Psoas muscle (tissue), 8 donors: ENCODE measurements at regions of chr5 and their contacts with region 1.

Region 1: DNA sequence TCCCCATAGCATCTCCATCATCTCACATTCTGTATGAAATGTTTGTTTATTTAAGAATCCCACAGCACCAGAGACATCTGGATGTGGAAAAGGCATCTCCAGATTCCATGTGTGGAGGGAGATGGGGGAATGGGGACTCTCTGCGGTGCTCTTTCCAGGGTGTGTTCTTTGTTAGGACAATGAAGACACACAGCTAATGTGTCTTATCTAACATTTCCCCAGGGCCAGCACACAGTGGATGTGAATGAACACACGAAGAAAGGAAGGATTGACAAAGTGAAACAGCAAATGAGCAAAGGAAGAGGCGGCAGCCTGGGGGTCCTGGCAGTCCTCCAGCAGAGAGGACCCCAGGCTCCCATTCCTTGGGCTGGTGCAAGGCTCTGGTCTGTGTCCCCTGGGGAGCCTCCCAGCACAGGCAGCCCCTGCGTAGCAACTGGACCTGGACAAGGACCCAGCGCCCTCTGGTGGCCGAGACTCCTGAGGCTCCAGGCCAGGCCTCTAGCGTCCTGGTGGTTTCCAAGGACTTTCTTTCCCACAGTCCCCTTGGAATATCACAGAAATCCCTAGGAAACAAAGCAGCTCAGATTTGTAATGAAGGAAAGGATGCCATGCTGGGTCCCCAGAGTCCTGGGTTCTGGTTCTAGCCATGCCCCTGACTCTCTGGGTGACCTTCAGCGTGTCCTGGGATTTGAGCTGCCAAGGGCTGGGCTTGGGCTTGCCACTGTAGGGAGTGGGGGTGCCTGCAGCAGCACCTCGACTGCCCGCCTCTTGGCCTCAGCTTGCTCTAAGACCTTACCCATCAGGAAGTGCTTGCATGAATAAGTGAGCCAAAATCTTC is 3.5 kb upstream of the PDLIM7 start:
- DNase-seq: peak; percentile 92 to 96
- ATAC-seq: peak; percentile 32 to 54 (median 34)
- H3K4me3 ChIP-seq: no peak overlapping the region
- H3K27ac ChIP-seq: peak overlapping the region; percentile 3
- H3K4me1 ChIP-seq: no peaks in the 10 kb centered on the region
- H3K27me3 ChIP-seq: no peaks in the 10 kb centered on the region
- CTCF ChIP-seq: peak; percentile 93

Region 2: DNA sequence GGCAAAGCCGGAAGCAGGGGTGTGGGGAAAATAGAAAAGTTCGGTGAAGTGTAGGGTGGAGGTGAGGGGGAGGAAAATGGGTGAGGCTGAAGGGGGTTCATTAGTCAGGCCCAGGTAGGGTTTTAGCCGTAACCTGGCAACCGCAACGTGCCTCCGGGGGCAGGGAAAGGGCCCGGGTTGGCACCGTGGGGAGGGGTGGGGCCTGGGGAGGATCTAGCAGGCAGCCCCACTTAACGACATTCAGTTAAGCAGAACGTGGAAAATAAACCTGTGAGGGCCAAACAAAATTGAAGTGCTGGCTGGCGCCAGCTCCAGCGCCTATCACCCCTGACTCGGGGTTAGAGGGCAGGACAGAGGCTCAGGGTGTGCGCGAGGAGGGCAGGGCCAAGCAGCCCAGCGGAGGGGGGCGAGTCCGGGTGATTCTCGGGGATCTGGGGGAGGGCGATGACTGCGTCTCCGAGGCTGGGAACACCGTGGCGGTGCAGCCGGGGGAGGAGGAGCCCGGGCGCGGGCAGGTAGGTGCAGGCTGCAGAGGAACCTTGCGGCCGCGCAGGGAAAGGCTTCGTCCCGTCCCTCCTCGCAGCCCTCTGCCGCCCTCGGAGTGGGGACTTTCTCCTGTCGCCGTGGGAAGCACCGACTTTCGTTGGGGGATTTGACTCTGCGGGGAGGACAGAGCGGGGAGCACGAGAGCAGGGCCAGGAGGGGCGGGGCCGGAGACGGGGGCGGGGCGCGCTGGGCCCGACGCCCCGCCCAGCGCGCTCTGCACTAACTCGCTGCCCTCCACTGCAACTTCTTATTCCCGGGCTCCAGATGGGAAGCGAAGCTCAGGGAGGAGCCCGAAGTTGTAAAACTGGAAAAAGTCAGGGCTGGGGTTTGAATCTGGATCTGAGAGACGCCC is 138.0 kb before region 1 on chr5:
- intact Hi-C with region 1: no loop called
- DNase-seq: peak; percentile 65 to 70
- ATAC-seq: peak; percentile 34 to 67 (median 46)
- H3K4me3 ChIP-seq: peak overlapping the region; percentile 64
- H3K27ac ChIP-seq: no peak overlapping the region
- H3K4me1 ChIP-seq: peaks cover 33% of the 10 kb centered on the region
- H3K27me3 ChIP-seq: no peaks in the 10 kb centered on the region
- CTCF ChIP-seq: no peak

Region 3: GRCh38 chr5:177390363-177391300 is 110.3 kb before region 1 on chr5:
- intact Hi-C with region 1: loop called (anchors 2 to 5 kb)
- DNase-seq: peak; percentile 73 to 82
- ATAC-seq: peak; percentile 87 to 97 (median 94)
- H3K4me3 ChIP-seq: no peak overlapping the region
- H3K27ac ChIP-seq: no peak overlapping the region
- H3K4me1 ChIP-seq: no peaks in the 10 kb centered on the region
- H3K27me3 ChIP-seq: no peaks in the 10 kb centered on the region
- CTCF ChIP-seq: peak; percentile 99

Region 4: GRCh38 chr5:177403792-177404640 is 96.9 kb before region 1 on chr5:
- intact Hi-C with region 1: loop called in 1 of 2 experiments (anchors 5 kb)
- DNase-seq: peak; percentile 88 to 93
- ATAC-seq: peak; percentile 92 to 98 (median 96)
- H3K4me3 ChIP-seq: peak overlapping the region; percentile 60
- H3K27ac ChIP-seq: no peak overlapping the region
- H3K4me1 ChIP-seq: peaks cover 14% of the 10 kb centered on the region
- H3K27me3 ChIP-seq: peaks cover 0 to 58% (median 35%) of the 10 kb centered on the region in 3 donors
- CTCF ChIP-seq: peak; percentile 73

Region 5: DNA sequence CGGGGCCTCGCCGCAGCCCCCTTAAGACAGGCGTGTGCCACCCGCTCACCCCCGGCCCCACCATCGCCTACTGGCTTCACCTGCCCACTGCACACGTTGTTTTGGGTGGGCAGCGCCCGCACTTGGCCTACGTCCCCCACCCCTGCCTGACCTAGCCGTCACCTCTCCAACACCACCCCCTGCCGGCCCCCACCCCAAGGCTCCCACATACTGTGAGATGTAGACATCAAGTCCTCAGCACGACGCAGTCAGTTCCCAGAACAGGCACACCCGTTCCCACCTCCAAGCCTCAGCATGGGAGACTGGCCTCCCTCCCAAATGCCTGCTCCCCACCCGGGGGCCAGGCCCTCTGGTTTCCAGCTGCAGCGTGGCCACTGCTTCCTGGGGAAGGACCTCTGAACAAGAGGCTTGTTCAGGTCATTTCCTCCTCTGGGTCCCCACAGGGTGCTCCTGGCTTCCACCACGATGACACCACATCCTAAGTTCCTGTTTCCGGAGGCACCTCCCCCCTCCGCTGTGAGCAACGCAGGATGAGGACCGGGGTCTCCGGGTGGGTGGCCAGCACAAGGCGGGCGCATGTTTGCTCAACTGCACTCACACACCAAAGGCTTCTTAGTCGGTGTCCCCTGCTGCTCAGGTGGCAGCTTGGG is 38.8 kb before region 1 on chr5:
- intact Hi-C with region 1: no loop called
- DNase-seq: peak in 1 of 2 donors; percentile 74
- ATAC-seq: peak in 2 of 4 donors; percentile 21 to 24
- H3K4me3 ChIP-seq: peak overlapping the region; percentile 28
- H3K27ac ChIP-seq: peak overlapping the region; percentile 32
- H3K4me1 ChIP-seq: peaks cover 3% of the 10 kb centered on the region
- H3K27me3 ChIP-seq: no peaks in the 10 kb centered on the region
- CTCF ChIP-seq: no peak